ENCODE measurements at regions of chr12 and their contacts with region 1.

Region 1: GRCh38 chr12:118372541-118373495 is at the start of gene TAOK3:
- H3K4me3 ChIP-seq: peak within 1 kb of the TSS; percentile 87
- H3K27ac ChIP-seq: no peak within 1 kb of the TSS; the same call in 1 of the 2 replicates
- H3K4me1 ChIP-seq: no peaks in the 10 kb centered on the region
- CTCF ChIP-seq: peak; percentile 39; the same call in 1 of the 2 replicates

Region 2: GRCh38 chr12:117857632-117858612 is 514.9 kb before region 1 on chr12:
- CTCF ChIA-PET with region 1: interaction called, 11 read pairs
- POLR2A ChIA-PET with region 1: no interaction called
- H3K4me3 ChIP-seq: no peak overlapping the region
- H3K27ac ChIP-seq: no peak overlapping the region
- H3K4me1 ChIP-seq: no peaks in the 10 kb centered on the region
- CTCF ChIP-seq: 0 out of 2 replicates have a peak, but pooled peaks have one; percentile 27

Region 3: GRCh38 chr12:118120579-118121363 is 252.0 kb before region 1 on chr12:
- CTCF ChIA-PET with region 1: interaction called, 67 read pairs
- POLR2A ChIA-PET with region 1: interaction called, 11 read pairs
- H3K4me3 ChIP-seq: no peak overlapping the region
- H3K27ac ChIP-seq: no peak overlapping the region
- H3K4me1 ChIP-seq: peaks cover 3% of the 10 kb centered on the region; the same call in 1 of the 2 replicates
- CTCF ChIP-seq: no peak

Region 4: GRCh38 chr12:118164798-118165486 is 207.9 kb before region 1 on chr12:
- CTCF ChIA-PET with region 1: interaction called, 87 read pairs
- POLR2A ChIA-PET with region 1: interaction called, 3 read pairs
- H3K4me3 ChIP-seq: no peak overlapping the region
- H3K27ac ChIP-seq: no peak overlapping the region
- H3K4me1 ChIP-seq: no peaks in the 10 kb centered on the region
- CTCF ChIP-seq: peak; percentile 44; the same call in 1 of the 2 replicates

Region 5: GRCh38 chr12:118183705-118184104 is 189.1 kb before region 1 on chr12:
- CTCF ChIA-PET with region 1: interaction called, 125 read pairs
- POLR2A ChIA-PET with region 1: interaction called, 8 read pairs
- H3K4me3 ChIP-seq: no peak overlapping the region
- H3K27ac ChIP-seq: no peak overlapping the region
- H3K4me1 ChIP-seq: no peaks in the 10 kb centered on the region
- CTCF ChIP-seq: no peak

Region 6: GRCh38 chr12:118391424-118391823 is 18.6 kb after region 1 on chr12:
- CTCF ChIA-PET with region 1: interaction called, 67 read pairs
- POLR2A ChIA-PET with region 1: no interaction called
- H3K4me3 ChIP-seq: no peak overlapping the region
- H3K27ac ChIP-seq: no peak overlapping the region
- H3K4me1 ChIP-seq: no peaks in the 10 kb centered on the region
- CTCF ChIP-seq: no peak